Heart right ventricle (tissue), 16 donors: ENCODE measurements at regions of chr16 and their contacts with region 1.

Region 1: DNA sequence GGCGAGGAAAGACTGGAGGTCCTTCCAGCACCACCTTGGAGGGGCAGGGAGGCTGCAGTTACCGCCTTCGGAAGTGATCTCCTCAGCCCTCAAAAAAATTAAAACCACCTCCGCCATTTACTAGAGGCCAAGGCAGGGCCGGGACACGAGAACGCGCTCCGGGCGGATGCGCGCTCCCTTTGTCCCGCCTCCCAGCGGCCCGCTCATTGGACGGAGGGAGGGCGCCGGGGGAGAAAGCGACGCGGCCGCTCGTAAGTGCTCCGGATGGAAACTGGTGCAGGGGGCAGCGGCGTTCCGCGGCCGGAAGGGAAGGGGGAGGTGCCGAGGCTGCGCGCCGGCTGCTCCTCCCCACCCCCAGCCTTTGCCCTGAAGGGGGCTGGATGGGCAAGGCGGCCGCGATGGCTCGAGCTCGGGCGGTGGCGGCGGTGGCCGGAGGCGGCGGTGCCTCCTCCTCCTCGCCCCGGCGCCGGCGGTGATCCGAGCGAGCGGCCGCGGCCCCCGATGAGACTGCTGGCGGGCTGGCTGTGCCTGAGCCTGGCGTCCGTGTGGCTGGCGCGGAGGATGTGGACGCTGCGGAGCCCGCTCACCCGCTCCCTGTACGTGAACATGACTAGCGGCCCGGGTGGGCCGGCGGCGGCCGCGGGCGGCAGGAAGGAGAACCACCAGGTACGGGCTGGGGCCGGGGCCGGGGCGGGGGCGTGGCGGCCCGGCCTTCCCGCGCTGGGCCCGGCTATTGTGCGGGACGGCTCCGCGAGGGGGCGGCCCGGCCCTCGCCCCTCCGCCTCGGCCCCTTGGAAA is at the start of gene METTL9:
- DNase-seq: peak; percentile 94 to 95
- ATAC-seq: peak; percentile 97 to 100 (median 100)
- H3K4me3 ChIP-seq: peak within 1 kb of the TSS; percentile 64 to 96 (median 84)
- H3K27ac ChIP-seq: peak within 1 kb of the TSS; percentile 88 to 98 (median 96)
- H3K4me1 ChIP-seq: peaks cover 10 to 55% (median 34%) of the 10 kb centered on the region in 9 donors
- H3K27me3 ChIP-seq: no peaks in the 10 kb centered on the region
- CTCF ChIP-seq: peak in 2 of 9 donors; percentile 3 to 13
- total RNA-seq, gene METTL9: 48.3 to 66.0 (median 52.4) TPM

Region 2: DNA sequence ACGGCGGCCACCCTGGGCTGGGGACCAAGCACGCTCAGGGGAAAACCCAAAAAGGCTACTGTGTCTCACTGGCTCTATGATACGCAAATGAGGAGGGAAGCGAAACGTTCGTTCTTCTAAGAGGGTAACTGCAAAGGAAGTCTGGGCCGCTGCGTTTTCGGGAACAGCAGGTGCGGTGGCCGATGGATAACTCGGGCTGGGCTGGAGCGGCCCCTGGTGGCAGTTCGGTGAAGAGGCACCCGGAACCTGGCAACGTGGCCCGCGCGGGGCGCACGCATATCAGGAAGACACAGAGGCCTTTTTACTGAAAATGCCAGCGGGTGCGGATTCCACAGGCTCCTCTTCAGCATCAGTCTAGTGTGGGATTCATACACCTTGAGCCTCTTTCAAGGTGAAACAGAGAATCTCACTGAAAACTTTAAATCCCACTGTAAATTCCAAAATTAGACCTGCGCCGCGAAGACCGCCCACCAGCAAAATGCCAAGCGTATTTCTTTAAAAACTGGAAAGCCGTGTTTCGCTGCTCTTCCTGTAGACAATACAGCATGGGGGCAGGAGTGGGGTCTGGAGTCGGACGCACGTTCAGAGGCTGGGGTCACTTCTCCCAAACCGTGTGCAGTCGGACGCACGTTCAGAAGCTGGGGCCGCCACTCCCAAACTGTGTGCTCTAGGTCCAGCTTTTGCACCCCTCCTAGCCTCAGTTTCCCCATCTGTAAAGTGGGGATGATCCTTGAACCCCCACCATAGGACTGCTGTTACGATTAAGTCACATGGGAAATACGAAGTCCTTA is 44.4 kb before region 1 on chr16:
- intact Hi-C with region 1: no loop called
- DNase-seq: peak; percentile 87 to 91
- ATAC-seq: peak; percentile 49 to 82 (median 71)
- H3K4me3 ChIP-seq: peak overlapping the region in 4 of 10 donors; percentile 2 to 34 (median 13)
- H3K27ac ChIP-seq: peak overlapping the region in 1 of 10 donors; percentile 48
- H3K4me1 ChIP-seq: peaks cover 4 to 31% (median 16%) of the 10 kb centered on the region in 9 donors
- H3K27me3 ChIP-seq: peaks cover 0 to 17% (median 9%) of the 10 kb centered on the region in 7 donors
- CTCF ChIP-seq: peak in 8 of 9 donors; percentile 98 to 100 (median 100)

Region 3: GRCh38 chr16:21638573-21638975 is 39.1 kb after region 1 on chr16:
- intact Hi-C with region 1: loop called in 4 of 10 experiments (anchors 5 kb)
- DNase-seq: no peak
- ATAC-seq: no peak
- H3K4me3 ChIP-seq: no peak overlapping the region
- H3K27ac ChIP-seq: peak overlapping the region in 1 of 10 donors; percentile 18
- H3K4me1 ChIP-seq: peaks cover 0 to 13% (median 0%) of the 10 kb centered on the region in 9 donors
- H3K27me3 ChIP-seq: no peaks in the 10 kb centered on the region
- CTCF ChIP-seq: no peak

Region 4: DNA sequence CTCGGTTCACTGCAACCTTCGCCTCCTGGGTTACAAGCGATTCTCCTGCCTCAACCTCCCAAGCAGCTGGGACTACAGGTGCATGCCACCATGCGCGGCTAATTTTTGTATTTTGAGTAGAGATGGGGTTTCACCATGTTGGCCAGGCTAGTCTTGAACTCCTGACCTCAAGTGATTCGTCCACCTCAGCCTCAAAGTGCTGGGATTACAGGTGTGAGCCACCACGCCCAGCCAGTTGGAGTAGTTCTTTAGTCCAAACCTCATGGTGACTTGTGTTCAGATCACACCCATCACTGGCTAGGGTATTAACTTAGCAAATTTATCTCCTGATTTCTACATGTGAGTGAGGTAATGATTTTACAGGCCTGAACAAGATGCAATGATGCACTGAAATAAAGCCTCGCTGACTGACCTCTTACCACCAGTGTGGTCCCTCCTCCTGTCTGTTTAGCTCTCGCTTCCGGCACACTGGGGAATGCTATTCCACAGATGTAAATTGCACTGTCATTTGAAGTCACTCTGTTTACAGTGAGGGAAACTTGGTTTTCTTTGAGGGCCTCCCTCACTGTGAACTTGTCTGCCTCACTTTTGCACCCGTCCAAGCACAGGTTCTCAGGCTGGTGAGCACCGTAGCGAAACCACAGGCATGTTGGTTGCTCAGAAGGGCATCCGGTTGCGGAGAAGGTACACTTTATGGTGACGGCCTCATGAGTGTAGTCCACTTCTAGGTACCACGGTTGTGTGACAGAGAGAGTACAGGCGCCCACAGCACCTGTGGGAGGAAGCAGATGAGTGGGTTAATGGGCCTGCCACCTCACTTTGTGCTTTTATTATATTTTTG is 47.5 kb after region 1 on chr16:
- intact Hi-C with region 1: loop called in 3 of 10 experiments (anchors 5 kb)
- DNase-seq: no peak
- ATAC-seq: peak in 1 of 8 donors; percentile 32
- H3K4me3 ChIP-seq: no peak overlapping the region
- H3K27ac ChIP-seq: peak overlapping the region in 8 of 10 donors; percentile 46 to 86 (median 69)
- H3K4me1 ChIP-seq: peaks cover 4 to 78% (median 27%) of the 10 kb centered on the region in 9 donors
- H3K27me3 ChIP-seq: no peaks in the 10 kb centered on the region
- CTCF ChIP-seq: no peak